Naive thymus-derived CD4-positive, alpha-beta T cell (primary cell): ENCODE measurements at regions of chrX and their contacts with region 1.

Region 1: DNA sequence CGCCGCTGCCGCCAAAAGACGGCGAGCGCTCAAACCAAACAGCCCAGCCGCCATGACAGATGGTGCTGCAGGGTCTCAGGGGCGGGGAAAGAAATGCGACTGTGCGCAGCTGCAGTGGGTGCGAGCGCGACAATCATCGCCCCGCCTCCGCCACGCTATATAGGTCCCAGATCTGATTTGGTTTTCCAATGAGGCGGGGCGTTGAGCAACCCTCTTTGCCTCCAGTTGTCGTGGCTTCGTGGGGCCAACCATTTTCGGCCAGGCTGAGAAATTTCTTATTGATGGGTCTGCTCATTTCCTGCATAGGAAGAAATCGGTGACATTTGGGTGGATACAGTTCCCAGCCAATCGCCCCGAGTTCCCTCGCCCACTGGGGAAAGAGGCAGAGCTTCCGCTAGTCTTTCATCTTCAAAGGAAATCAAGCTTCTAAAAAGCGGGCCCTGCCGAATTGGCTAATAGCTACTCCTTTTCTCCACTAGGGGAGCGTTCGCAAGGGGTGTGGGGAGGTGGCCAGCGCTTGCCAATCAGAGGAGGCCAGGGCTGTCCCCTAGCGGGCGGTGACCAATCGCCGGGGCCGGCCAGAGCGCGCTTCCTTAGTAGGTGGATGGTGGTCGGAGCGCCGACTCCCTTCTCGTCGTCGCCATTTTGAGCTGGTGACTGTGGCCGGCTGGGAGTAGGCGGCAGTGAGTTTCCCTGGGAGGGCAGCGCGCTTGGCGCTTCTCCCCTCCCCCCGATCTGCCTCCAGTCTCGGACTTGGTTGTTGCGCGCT is at the starts of genes NDUFB11 and RBM10:
- DNase-seq: peak; percentile 64 to 90 (median 87)
- ATAC-seq: peak; percentile 95
- H3K4me3 ChIP-seq: peak within 1 kb of the TSS; percentile 77
- H3K4me3 Mint-ChIP-seq: peak within 1 kb of the TSS; percentile 92 to 99 (median 96)
- H3K27ac ChIP-seq: peak within 1 kb of the TSS; percentile 94
- H3K27ac Mint-ChIP-seq: peak within 1 kb of the TSS; percentile 93 to 99 (median 96)
- H3K4me1 ChIP-seq: peaks cover 6 to 12% of the 10 kb centered on the region in 2 donors
- H3K4me1 Mint-ChIP-seq: peaks cover 6 to 42% (median 26%) of the 10 kb centered on the region in 7 donors
- H3K27me3 ChIP-seq: no peaks in the 10 kb centered on the region
- H3K27me3 Mint-ChIP-seq: no peaks in the 10 kb centered on the region
- total RNA-seq, gene NDUFB11: 51.3 to 92.5 (median 55.2) TPM
- total RNA-seq, gene RBM10: 31.8 to 55.6 (median 47.6) TPM

Region 2: DNA sequence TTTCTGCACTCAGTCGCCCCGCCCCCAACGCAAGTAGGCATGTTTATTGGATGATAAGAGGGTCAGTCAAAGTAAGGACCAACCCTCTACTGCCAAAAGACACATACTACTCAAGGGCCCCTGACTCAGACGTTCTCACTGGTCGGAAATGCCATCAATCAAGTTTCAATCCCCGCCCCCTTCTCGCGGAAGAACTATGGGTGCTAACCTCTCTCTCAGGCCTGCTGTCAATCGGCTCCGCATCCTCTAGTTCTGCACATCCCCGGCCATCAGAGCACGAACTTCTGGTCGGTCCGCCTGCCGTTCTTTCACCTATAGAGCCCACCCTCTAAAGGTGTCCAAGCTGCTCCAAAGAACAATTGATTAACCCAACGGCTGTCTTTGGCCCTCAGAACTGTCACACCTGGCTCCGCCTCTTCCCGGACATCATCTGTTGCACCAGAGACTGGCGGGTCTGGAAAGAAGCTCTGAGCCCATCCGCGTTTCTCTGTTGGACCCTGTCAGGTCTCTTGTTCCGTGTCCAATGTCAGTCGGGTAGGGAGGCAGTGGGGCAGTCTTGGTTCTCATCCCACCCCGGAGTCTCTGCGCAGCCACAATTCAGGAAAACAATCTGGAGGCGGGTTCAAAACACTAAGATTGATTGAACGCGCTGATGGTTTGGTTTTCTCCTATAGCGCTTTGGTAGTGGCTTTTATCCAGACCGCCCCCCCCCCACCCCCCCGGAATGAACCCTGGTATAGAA is 15.5 kb before region 1 on chrX:
- CTCF ChIA-PET with region 1: interaction called, 4 read pairs
- POLR2A ChIA-PET with region 1: interaction called, 33 read pairs
- intact Hi-C with region 1: loop called (anchors 1 kb)
- DNase-seq: peak; percentile 74 to 94 (median 90)
- ATAC-seq: peak; percentile 99
- H3K4me3 ChIP-seq: peak overlapping the region; percentile 95
- H3K4me3 Mint-ChIP-seq: peak overlapping the region; percentile 76 to 100 (median 97)
- H3K27ac ChIP-seq: peak overlapping the region; percentile 72
- H3K27ac Mint-ChIP-seq: peak overlapping the region; percentile 93 to 99 (median 97)
- H3K4me1 ChIP-seq: no peaks in the 10 kb centered on the region
- H3K4me1 Mint-ChIP-seq: peaks cover 0 to 7% (median 4%) of the 10 kb centered on the region in 7 donors
- H3K27me3 ChIP-seq: no peaks in the 10 kb centered on the region
- H3K27me3 Mint-ChIP-seq: no peaks in the 10 kb centered on the region